Activated CD4-positive, alpha-beta memory T cell treated with anti-CD3 and anti-CD28 coated beads for 36 hours (primary cell): ENCODE measurements at regions of chr11 and their contacts with region 1.

Region 1: GRCh38 chr11:88301488-88302140 is 35.9 kb downstream of the CTSC start:
- DNase-seq: peak; percentile 43
- H3K4me3 Mint-ChIP-seq: peak overlapping the region; percentile 46
- H3K27ac Mint-ChIP-seq: peak overlapping the region; percentile 78
- H3K4me1 Mint-ChIP-seq: peaks cover 32% of the 10 kb centered on the region
- H3K27me3 Mint-ChIP-seq: no peaks in the 10 kb centered on the region

Region 2: GRCh38 chr11:88174709-88175568 is 126.7 kb before region 1 on chr11 and contains the start of gene RAB38:
- CTCF ChIA-PET with region 1: no interaction called
- POLR2A ChIA-PET with region 1: no interaction called
- intact Hi-C with region 1: loop called (anchors 2 kb)
- DNase-seq: peak; percentile 74
- H3K4me3 Mint-ChIP-seq: peak within 1 kb of the TSS; percentile 70
- H3K27ac Mint-ChIP-seq: no peak within 1 kb of the TSS
- H3K4me1 Mint-ChIP-seq: peaks cover 37% of the 10 kb centered on the region
- H3K27me3 Mint-ChIP-seq: peaks cover 20% of the 10 kb centered on the region
- total RNA-seq, gene RAB38: 0.76 to 0.97 TPM

Region 3: DNA sequence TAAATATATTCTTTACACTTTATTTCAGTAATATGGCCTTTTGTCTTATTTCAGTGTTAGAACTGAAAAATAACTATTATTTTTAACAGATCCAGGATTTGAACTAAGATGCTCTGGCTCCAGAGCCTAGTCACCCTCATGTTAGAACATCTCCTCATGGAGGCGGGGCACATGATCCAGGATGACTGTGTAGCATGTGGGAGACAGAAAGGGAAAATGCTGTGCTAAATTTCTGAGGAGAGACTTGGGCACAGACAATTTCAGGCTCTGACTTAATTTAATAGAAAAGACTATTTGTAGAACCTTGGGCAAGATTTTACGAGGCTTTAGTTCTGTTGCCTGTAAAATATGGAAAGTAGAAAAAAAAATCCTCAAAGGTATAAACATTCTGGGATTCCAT is 11.8 kb after region 1 on chr11:
- CTCF ChIA-PET with region 1: no interaction called
- POLR2A ChIA-PET with region 1: no interaction called
- intact Hi-C with region 1: no loop called
- DNase-seq: no peak
- H3K4me3 Mint-ChIP-seq: no peak overlapping the region
- H3K27ac Mint-ChIP-seq: no peak overlapping the region
- H3K4me1 Mint-ChIP-seq: peaks cover 14% of the 10 kb centered on the region
- H3K27me3 Mint-ChIP-seq: no peaks in the 10 kb centered on the region

Region 4: GRCh38 chr11:88327061-88327460 is 25.4 kb after region 1 on chr11:
- CTCF ChIA-PET with region 1: no interaction called
- POLR2A ChIA-PET with region 1: interaction called, 3 read pairs
- intact Hi-C with region 1: loop called (anchors 2 kb)
- DNase-seq: no peak
- H3K4me3 Mint-ChIP-seq: no peak overlapping the region
- H3K27ac Mint-ChIP-seq: no peak overlapping the region
- H3K4me1 Mint-ChIP-seq: peaks cover 89% of the 10 kb centered on the region
- H3K27me3 Mint-ChIP-seq: no peaks in the 10 kb centered on the region

Region 5: DNA sequence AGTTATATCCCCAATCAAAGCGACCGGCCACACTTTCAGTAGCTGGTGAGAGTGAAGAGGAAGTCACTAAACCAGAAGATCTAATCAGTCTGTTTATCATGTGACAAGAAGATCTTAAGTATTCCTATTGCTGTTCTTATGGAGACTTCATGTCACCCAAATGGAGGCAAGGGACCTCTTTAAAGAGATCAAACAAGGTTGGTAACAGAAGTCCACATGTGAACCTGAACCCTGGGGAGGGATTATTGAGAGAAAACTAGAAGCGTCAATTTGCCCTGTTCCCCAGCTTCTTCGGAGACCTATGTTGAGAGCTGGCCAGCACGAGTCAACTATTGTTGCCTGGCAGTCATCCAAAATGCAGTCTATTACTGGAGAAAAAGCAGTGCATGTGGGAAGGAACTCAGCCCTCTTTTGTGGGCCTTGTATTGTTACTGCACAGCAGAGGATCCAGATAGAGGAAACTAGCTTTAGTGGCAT is 112.8 kb after region 1 on chr11:
- CTCF ChIA-PET with region 1: no interaction called
- POLR2A ChIA-PET with region 1: no interaction called
- intact Hi-C with region 1: loop called (anchors 2 kb)
- DNase-seq: peak; percentile 31
- H3K4me3 Mint-ChIP-seq: no peak overlapping the region
- H3K27ac Mint-ChIP-seq: peak overlapping the region; percentile 78
- H3K4me1 Mint-ChIP-seq: peaks cover 25% of the 10 kb centered on the region
- H3K27me3 Mint-ChIP-seq: no peaks in the 10 kb centered on the region